Activated CD4-positive, alpha-beta memory T cell treated with anti-CD3 and anti-CD28 coated beads, Interleukin-2, amount 10 ng/mL, durations not matched to agents 7 days and 5 days (primary cell): ENCODE measurements at regions of chr16 and their contacts with region 1.

Region 1: DNA sequence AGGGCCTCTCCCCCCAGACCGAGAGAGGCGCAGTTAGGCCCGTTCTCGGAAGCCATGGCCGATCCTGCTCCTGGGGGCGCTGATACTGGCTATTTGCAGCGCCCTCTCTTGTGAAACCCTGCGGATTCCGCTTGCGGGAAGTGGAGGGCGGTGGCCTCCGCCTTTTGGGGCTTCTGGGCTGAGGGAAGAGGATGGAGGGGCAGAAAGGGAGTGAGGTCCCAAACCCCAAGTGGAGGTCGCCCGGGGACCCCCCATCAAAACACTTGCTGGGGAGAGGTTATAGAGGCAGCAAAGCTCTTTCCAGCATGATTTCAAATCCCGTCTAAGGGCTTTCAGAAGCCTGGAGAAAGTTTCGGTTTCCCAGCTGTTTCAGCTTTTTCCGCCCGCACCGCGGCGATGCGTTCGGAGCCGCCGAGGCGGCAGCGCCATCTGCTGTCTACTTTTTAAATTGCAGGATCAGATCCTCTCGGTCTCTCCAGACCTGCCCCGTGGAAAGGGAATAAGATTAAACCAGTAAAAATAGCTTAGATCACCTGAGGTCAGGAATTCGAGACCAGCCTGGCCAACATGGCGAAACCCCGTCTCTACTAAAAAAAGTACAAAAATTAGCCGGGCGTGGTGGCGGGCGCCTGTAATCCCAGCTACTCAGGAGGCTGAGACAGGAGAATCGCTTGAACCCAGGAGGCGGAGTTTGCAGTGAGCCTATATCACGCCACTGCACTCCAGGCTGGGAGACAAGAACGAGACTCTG is 15.8 kb downstream of the SNX20 start:
- DNase-seq: peak; percentile 88
- H3K4me3 Mint-ChIP-seq: peak overlapping the region; percentile 57
- H3K27ac Mint-ChIP-seq: peak overlapping the region; percentile 94
- H3K4me1 Mint-ChIP-seq: peaks cover 47% of the 10 kb centered on the region
- H3K27me3 Mint-ChIP-seq: no peaks in the 10 kb centered on the region

Region 2: GRCh38 chr16:50210266-50211038 is 454.9 kb before region 1 on chr16:
- CTCF ChIA-PET with region 1: interaction called, 29 read pairs
- POLR2A ChIA-PET with region 1: no interaction called
- DNase-seq: peak; percentile 76
- H3K4me3 Mint-ChIP-seq: no peak overlapping the region
- H3K27ac Mint-ChIP-seq: peak overlapping the region; percentile 4
- H3K4me1 Mint-ChIP-seq: peaks cover 35% of the 10 kb centered on the region
- H3K27me3 Mint-ChIP-seq: no peaks in the 10 kb centered on the region

Region 3: DNA sequence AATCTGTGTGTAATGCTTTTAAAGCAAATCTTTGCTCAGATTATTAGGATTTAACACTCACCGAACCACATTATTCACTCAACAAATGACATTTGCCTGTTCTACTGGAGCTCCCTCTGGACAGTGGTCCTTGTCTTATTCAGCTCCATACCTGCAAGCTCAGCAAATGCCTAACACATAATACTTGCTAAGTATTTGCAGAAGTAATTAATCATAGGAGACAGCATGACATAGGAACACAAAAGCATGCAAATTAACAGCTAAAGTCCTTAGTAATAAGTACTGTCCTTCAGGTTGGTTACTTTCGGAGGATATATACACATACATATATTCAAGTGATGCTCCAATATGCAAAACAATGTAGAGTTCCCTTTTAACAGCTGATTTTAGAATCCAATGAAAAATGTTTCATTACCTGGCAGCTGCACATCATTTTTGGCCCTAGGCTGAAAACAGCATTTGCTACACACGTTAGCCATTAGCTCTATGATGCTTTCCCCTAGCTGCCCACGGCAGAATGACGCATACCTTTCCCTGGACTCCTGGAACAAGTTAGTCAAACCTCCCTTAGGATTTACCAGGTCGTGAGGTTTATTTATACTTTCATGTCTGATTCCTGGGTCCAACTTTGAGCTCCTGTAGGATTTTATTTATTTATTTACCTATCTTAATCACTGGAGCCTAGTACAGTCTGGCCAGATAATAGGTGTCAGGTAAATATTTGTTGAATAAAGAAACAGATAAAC is 305.1 kb before region 1 on chr16:
- CTCF ChIA-PET with region 1: interaction called, 34 read pairs
- POLR2A ChIA-PET with region 1: interaction called, 6 read pairs
- DNase-seq: no peak
- H3K4me3 Mint-ChIP-seq: no peak overlapping the region
- H3K27ac Mint-ChIP-seq: no peak overlapping the region
- H3K4me1 Mint-ChIP-seq: peaks cover 41% of the 10 kb centered on the region
- H3K27me3 Mint-ChIP-seq: no peaks in the 10 kb centered on the region

Region 4: DNA sequence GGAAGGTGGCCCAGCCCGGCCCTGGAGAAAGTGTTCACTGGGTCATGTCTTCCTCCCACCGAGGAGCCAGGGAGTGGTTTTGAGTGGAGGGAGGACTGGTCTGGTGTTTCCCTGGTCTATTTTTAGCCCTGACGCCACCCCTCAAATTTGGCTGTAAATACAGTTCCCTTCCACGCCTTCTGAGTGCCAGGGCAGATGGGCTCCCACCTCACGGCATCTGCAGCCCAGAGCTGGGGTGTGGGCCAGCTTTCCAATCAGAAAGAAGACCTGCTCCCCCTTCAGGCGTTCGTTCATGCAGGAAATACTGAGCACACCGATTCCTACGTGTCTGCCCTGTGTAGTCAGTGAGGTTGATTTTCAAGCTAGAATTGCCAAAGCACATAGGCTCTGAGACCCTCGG is 37.9 kb before region 1 on chr16:
- CTCF ChIA-PET with region 1: interaction called, 10 read pairs
- POLR2A ChIA-PET with region 1: no interaction called
- DNase-seq: peak; percentile 40
- H3K4me3 Mint-ChIP-seq: no peak overlapping the region
- H3K27ac Mint-ChIP-seq: peak overlapping the region; percentile 12
- H3K4me1 Mint-ChIP-seq: peaks cover 16% of the 10 kb centered on the region
- H3K27me3 Mint-ChIP-seq: no peaks in the 10 kb centered on the region

Region 5: GRCh38 chr16:50696575-50697420 is 31.5 kb after region 1 on chr16:
- CTCF ChIA-PET with region 1: interaction called, 23 read pairs
- POLR2A ChIA-PET with region 1: interaction called, 33 read pairs
- DNase-seq: peak; percentile 84
- H3K4me3 Mint-ChIP-seq: peak overlapping the region; percentile 87
- H3K27ac Mint-ChIP-seq: peak overlapping the region; percentile 81
- H3K4me1 Mint-ChIP-seq: peaks cover 84% of the 10 kb centered on the region
- H3K27me3 Mint-ChIP-seq: peaks cover 3% of the 10 kb centered on the region

Region 6: GRCh38 chr16:50776037-50776436 is 110.7 kb after region 1 on chr16:
- CTCF ChIA-PET with region 1: interaction called, 16 read pairs
- POLR2A ChIA-PET with region 1: interaction called, 4 read pairs
- DNase-seq: no peak
- H3K4me3 Mint-ChIP-seq: no peak overlapping the region
- H3K27ac Mint-ChIP-seq: no peak overlapping the region
- H3K4me1 Mint-ChIP-seq: peaks cover 57% of the 10 kb centered on the region
- H3K27me3 Mint-ChIP-seq: no peaks in the 10 kb centered on the region